ENCODE measurements at regions of chr5 and their contacts with region 1.

Region 1: DNA sequence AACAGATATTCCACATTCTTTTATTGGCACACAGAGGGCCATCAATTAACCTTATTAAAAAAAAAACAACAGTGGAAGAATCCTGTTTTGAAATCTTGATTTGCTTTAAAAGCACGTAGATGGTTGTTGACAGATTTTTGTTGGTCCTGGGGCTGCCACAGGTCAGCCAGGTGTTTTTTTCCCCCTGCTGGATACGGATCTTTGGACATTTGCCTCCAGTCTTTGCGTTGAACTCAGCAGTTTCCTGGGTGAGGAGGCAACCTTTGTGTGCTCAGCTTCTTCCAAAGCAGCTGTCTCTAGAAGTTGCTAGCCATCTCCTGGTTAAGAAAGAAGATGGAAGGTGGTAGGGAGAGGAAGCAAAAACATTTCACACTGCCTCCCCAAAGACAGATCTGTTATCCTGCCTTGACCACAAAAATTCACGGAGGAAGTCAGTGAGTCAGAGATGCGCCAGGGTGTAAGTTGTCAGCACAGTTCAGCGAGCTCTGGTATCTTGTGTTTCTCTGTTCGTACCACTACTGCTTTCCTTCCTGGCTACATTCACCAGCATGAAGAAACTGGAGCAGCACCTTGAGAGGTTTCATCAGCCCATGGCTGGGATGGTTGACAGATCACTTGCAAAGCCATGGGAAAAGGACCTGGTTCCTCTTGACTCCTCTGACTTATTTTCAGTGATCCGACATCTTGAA is 207.3 kb downstream of the ARHGAP26 start:
- DNase-seq: peak; percentile 62
- ATAC-seq: peak; percentile 85
- H3K4me3 Mint-ChIP-seq: peak overlapping the region; percentile 63
- H3K27ac Mint-ChIP-seq: peak overlapping the region; percentile 97
- H3K4me1 Mint-ChIP-seq: peaks cover 71% of the 10 kb centered on the region
- H3K27me3 Mint-ChIP-seq: no peaks in the 10 kb centered on the region
- CTCF ChIP-seq: no peak

Region 2: DNA sequence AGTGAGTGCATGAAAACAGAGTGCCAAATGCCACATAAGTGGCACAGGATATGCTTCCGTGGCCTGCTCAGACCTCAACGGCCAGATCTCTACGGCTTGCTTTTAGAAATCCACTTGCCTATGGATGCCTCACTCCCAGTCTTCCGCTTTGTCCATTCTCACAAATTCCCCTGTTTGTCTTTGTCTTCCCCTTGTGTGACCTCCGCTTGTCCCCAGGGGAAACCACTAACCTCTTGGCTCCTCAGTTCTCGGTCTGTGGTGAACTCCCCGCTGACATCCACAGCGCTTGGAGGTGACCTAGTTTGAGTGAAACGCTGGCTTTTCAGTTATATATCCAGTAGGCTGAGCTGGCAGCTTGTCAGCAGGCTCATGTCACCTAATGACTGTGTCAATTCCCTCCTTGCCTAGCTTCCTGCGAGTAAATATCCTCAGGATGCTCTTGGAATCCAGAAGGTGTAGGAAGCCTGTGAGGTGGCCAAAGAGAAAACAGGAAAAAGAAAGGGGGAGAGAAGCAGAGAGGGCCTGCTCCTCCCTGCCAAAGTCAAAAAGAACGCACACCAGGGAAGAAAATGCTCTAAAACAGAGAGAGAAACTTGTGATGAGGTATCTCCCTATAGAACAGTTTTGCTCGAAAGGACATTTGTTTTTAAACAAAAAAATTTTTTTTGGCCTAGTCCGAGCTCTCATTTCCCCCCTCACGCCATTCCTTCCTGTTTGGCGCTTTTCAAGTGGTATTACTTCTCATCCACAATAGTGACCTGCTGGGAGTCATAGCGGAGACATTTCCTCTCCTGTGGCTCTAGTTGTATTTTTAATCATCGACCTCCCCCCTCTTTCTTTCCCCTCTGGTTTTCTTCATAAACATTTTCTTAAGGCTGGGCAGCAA is 551.1 kb before region 1 on chr5:
- CTCF ChIA-PET with region 1: no interaction called
- POLR2A ChIA-PET with region 1: no interaction called
- intact Hi-C with region 1: no loop called
- DNase-seq: peak; percentile 49
- ATAC-seq: peak; percentile 72
- H3K4me3 Mint-ChIP-seq: no peak overlapping the region
- H3K27ac Mint-ChIP-seq: peak overlapping the region; percentile 63
- H3K4me1 Mint-ChIP-seq: peaks cover 26% of the 10 kb centered on the region
- H3K27me3 Mint-ChIP-seq: no peaks in the 10 kb centered on the region
- CTCF ChIP-seq: no peak

Region 3: GRCh38 chr5:142922223-142922952 is 55.1 kb before region 1 on chr5:
- CTCF ChIA-PET with region 1: interaction called, 3 read pairs
- POLR2A ChIA-PET with region 1: no interaction called
- intact Hi-C with region 1: loop called (anchors 5 kb)
- DNase-seq: no peak
- ATAC-seq: no peak
- H3K4me3 Mint-ChIP-seq: no peak overlapping the region
- H3K27ac Mint-ChIP-seq: peak overlapping the region; percentile 26
- H3K4me1 Mint-ChIP-seq: peaks cover 37% of the 10 kb centered on the region
- H3K27me3 Mint-ChIP-seq: no peaks in the 10 kb centered on the region
- CTCF ChIP-seq: peak; percentile 41

Region 4: GRCh38 chr5:143106174-143106573 is 128.7 kb after region 1 on chr5:
- CTCF ChIA-PET with region 1: no interaction called
- POLR2A ChIA-PET with region 1: no interaction called
- intact Hi-C with region 1: no loop called
- DNase-seq: no peak
- ATAC-seq: no peak
- H3K4me3 Mint-ChIP-seq: no peak overlapping the region
- H3K27ac Mint-ChIP-seq: no peak overlapping the region
- H3K4me1 Mint-ChIP-seq: peaks cover 26% of the 10 kb centered on the region
- H3K27me3 Mint-ChIP-seq: no peaks in the 10 kb centered on the region
- CTCF ChIP-seq: no peak